ENCODE measurements at regions of chr6 and their contacts with region 1.

Region 1: DNA sequence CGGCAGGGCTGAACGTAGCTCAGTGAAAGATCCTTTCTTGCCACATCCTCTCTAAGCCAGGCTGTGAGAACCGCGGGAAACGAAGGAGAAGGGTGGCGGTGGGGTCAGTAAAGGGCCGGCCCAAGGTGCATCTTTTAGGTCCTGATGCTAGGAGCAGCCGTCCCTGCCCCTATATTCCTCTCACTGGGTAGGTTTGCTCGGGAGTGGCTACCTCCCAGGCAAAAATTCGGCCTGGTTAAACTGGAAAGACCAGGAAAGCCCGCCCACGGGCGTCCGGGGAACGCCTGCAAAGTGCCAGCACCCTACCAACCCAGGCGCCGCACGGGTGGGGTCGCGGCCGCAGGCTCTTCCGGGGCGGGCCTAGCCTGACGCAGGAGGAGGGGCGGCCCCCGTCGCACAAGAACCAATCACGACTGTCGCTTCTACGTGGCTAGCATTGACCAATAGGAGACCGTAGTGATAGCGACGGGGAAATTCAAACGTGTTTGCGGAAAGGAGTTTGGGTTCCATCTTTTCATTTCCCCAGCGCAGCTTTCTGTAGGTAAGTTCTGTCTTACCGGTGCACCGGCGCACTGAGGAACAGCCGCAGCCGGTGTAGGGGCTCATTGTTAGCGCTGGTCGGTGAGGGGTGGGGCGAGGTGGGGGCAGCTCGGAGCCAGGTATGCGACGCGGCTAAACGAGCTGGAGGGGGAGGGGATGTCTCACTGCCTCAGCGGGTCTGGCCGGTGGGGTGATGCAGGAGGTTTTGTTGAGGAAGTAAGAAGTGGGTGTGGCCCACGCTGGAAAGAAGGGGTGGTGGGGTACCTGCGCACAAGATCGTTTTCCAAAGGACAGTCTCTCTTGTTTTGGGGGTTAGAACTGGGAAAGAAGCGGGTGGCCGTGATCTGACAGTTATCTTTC is at the start of gene TTK:
- DNase-seq: peak; percentile 82
- ATAC-seq: peak; percentile 100
- H3K4me3 Mint-ChIP-seq: peak within 1 kb of the TSS; percentile 93
- H3K27ac Mint-ChIP-seq: peak within 1 kb of the TSS; percentile 86
- H3K4me1 Mint-ChIP-seq: peaks cover 20% of the 10 kb centered on the region
- H3K27me3 Mint-ChIP-seq: no peaks in the 10 kb centered on the region
- CTCF ChIP-seq: no peak
- total RNA-seq, gene TTK: 1.9 and 2.3 TPM in 2 replicates

Region 2: DNA sequence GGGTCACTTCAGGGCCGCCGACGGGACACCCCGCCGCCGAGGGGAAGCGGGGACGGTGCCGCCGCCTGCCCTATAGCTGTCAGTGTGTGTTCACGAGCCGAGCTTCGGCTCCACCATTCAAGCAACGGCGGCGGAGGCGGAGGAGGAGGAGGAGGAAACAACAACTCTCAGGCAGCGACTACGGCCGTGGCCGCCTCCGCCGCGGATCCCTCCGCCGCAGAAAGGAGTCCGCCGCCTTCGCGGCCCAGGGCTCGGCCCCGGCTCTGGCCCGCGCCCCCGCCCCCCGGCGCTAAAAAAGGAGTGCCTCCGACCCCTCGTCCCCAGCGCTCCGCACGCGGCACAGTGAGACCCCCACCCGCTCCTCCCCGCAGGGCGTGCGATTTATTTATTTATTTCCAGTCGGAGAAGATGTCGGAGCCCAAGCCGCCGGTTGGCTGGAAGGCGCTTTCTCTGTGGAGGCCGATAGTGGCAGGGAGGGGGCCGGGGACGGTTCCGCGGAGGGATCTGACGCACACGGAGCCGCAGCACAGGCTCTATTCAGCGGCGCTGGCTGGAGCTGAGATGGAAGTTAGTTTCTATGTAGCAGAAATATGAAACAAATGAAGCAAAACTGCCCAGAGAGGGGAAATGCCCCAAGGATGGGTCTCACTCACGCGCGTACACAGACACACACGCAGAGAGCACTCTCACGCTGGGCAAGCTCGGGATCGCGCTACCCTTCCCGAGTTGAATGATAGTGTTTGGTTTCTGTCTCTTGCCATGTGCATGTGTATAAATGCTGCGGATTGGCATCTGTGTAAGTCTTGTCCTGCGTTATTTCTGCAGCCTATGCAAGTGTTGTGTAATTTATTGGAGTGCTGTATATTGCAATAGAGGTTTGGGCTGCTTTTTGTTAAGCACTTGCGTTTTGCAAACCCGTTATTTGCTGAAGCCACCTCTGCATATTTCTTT is 926.1 kb before region 1 on chr6 and contains the start of gene PHIP:
- CTCF ChIA-PET with region 1: no interaction called
- POLR2A ChIA-PET with region 1: no interaction called
- intact Hi-C with region 1: loop called (anchors 1 kb)
- DNase-seq: peak; percentile 93
- ATAC-seq: peak; percentile 73
- H3K4me3 Mint-ChIP-seq: peak within 1 kb of the TSS; percentile 87
- H3K27ac Mint-ChIP-seq: peak within 1 kb of the TSS; percentile 96
- H3K4me1 Mint-ChIP-seq: peaks cover 43% of the 10 kb centered on the region
- H3K27me3 Mint-ChIP-seq: peaks cover 3% of the 10 kb centered on the region
- CTCF ChIP-seq: no peak
- total RNA-seq, gene PHIP: 27.7 and 32.3 TPM in 2 replicates

Region 3: GRCh38 chr6:79536954-79537747 is 467.3 kb before region 1 on chr6 and contains the start of gene LCA5:
- CTCF ChIA-PET with region 1: no interaction called
- POLR2A ChIA-PET with region 1: no interaction called
- intact Hi-C with region 1: loop called (anchors 5 kb)
- DNase-seq: peak; percentile 73
- ATAC-seq: peak; percentile 98
- H3K4me3 Mint-ChIP-seq: no peak within 1 kb of the TSS
- H3K27ac Mint-ChIP-seq: no peak within 1 kb of the TSS
- H3K4me1 Mint-ChIP-seq: no peaks in the 10 kb centered on the region
- H3K27me3 Mint-ChIP-seq: no peaks in the 10 kb centered on the region
- CTCF ChIP-seq: no peak
- total RNA-seq, gene LCA5: 0.17 and 0.18 TPM in 2 replicates

Region 4: DNA sequence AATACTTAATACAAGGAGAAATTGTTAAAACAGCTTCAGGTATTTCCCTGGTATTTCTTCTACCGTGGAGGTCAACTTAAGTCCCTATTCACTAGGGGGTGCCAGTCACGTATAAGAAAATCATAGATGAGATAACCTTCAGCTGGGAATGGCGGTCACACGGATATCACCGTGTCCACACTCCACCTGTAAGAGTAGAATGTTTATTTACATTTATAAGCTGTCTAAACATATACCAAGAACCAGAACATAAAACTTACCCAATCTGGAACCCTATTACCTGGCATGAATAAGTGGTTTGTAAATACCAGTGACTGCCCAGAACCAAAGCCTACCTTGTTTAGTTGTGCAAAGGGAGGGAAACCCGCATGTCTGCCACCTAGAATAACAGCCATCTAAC is 55.2 kb before region 1 on chr6:
- CTCF ChIA-PET with region 1: no interaction called
- POLR2A ChIA-PET with region 1: no interaction called
- intact Hi-C with region 1: loop called (anchors 2 kb)
- DNase-seq: no peak
- ATAC-seq: no peak
- H3K4me3 Mint-ChIP-seq: no peak overlapping the region
- H3K27ac Mint-ChIP-seq: no peak overlapping the region
- H3K4me1 Mint-ChIP-seq: peaks cover 19% of the 10 kb centered on the region
- H3K27me3 Mint-ChIP-seq: peaks cover 44% of the 10 kb centered on the region
- CTCF ChIP-seq: no peak

Measured in activated B cell treated with CpG ODN at 0.5 μM for 24 hours (primary cell).